ENCODE measurements at regions of chr1 and their contacts with region 1.

Region 1: DNA sequence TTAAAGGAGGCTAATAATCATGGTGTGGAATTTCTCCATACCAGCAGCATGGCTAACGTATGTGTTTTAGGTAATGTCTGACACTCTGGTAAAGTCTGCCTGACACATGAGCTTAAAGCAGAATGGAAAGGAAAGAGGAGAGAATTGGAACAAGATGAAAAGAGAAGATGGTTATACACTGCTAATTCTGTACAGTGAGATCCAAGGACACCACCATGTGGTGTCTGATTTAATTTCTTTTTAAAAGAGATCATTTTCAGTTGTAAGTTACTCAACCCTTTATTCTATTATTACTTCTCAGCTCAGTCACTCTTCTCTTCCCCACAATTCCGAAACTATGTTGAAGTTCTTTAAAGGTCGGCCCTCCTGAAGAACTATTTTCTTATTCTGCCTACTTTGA is 15.6 kb downstream of the PRKAB2 start:
- DNase-seq: peak; percentile 32
- ATAC-seq: peak; percentile 63
- H3K4me3 ChIP-seq: no peak overlapping the region
- H3K27ac ChIP-seq: no peak overlapping the region
- H3K4me1 ChIP-seq: peaks cover 9% of the 10 kb centered on the region
- H3K27me3 ChIP-seq: no peaks in the 10 kb centered on the region
- CTCF ChIP-seq: no peak; the same call in 1 of the 2 replicates

Region 2: DNA sequence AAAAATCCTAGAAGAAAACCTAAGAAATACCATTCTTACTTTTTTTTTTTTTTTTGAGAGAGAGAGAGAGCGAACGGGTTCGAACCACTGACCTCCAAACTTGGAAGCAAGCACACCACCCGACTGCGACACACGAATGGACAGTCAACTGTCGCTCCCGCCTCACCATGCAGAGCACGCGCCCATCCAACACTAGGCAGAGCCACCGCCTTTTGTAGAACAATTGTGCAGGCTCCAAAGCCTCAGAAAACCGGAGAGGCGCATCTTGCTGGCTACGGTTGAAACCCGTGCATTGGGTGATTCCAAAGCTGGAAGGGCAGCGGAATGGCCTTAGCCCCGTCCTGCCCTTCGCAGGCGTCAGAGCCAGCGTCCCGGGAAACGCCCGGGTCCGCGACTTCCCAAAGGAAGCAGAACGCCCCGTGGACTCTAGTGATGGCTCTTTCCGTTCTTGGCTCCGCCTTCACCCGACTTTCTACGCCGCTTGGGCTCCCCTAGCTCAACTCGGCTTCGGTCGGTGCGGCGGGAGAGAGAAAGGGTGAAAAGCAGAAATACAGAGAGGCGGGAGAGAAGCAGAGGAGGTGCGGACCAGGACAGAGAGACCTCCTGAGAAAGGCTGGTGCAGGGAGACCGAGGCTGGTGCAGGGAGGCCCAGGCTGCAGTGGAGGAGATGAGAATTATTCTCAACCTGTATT is 84.1 kb before region 1 on chr1:
- CTCF ChIA-PET with region 1: no interaction called
- POLR2A ChIA-PET with region 1: no interaction called
- intact Hi-C with region 1: loop called (anchors 1 kb)
- DNase-seq: no peak
- ATAC-seq: no peak
- H3K4me3 ChIP-seq: no peak overlapping the region
- H3K27ac ChIP-seq: no peak overlapping the region
- H3K4me1 ChIP-seq: peaks cover 13% of the 10 kb centered on the region
- H3K27me3 ChIP-seq: no peaks in the 10 kb centered on the region
- CTCF ChIP-seq: no peak

Region 3: GRCh38 chr1:147185441-147185840 is 28.8 kb after region 1 on chr1:
- CTCF ChIA-PET with region 1: no interaction called
- POLR2A ChIA-PET with region 1: no interaction called
- intact Hi-C with region 1: no loop called
- DNase-seq: no peak
- ATAC-seq: no peak
- H3K4me3 ChIP-seq: no peak overlapping the region
- H3K27ac ChIP-seq: no peak overlapping the region
- H3K4me1 ChIP-seq: no peaks in the 10 kb centered on the region; the same call in 1 of the 2 replicates
- H3K27me3 ChIP-seq: no peaks in the 10 kb centered on the region
- CTCF ChIP-seq: no peak

Region 4: GRCh38 chr1:147225193-147225730 is 68.6 kb after region 1 on chr1 and contains the start of gene FMO5:
- CTCF ChIA-PET with region 1: no interaction called
- POLR2A ChIA-PET with region 1: no interaction called
- intact Hi-C with region 1: no loop called
- DNase-seq: peak; percentile 82
- ATAC-seq: peak; percentile 98
- H3K4me3 ChIP-seq: peak within 1 kb of the TSS; percentile 85
- H3K27ac ChIP-seq: peak within 1 kb of the TSS; percentile 9; the same call in 1 of the 2 replicates
- H3K4me1 ChIP-seq: no peaks in the 10 kb centered on the region
- H3K27me3 ChIP-seq: no peaks in the 10 kb centered on the region
- CTCF ChIP-seq: 0 out of 2 replicates have a peak, but pooled peaks have one; percentile 20
- total RNA-seq, gene FMO5: 2.8 and 3.2 TPM in 2 replicates

Measured in PC-3 (cell line).